ENCODE measurements at regions of chr13 and their contacts with region 1.

Region 1: DNA sequence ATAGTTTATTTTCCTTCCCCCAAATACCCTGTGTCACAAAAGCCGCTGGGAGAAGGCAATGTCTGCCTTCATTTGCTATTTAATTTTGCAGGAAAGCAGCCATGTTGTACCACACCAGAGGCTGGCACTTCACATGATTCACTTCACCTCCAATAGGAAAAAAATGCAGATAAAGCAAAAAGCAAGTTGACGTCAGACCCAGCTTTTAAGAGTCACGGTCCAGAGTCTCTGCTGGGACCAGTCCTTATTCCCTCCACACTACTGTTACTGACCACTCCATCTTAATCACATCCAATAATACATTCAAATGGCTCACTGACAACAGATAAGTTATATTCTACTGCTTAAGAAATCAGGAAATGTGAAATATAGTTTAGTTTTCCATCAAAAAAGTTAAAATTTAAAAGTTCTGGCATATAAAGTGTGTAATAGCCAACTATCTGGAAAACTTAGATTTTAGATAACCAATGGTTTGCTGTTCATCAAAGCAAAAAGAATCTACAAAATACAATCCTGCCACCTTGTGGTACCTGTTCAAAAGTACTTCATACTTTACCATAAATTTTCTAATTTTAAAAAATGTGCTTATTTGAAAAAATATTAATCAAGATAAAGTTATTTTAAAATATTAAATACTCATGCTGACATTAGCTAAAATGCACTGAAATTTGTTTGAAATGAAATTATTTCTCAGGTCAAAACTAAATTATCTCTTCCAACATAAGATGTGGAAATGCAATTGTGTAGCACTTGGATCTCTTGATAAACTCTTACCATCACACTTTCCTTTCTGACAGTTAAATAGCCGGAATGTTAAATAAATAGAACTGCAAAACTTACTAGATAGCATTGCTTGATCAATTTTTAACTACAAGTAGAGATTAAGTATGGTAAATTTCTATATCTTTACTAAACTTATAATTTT is 97.3 kb downstream of the SERP2 start:
- DNase-seq: peak; percentile 51
- H3K4me3 ChIP-seq: no peak overlapping the region
- CTCF ChIP-seq: peak; percentile 39

Region 2: GRCh38 chr13:43905435-43906031 is 565.4 kb before region 1 on chr13:
- in situ Hi-C with region 1: loop called (anchors 25 kb)
- DNase-seq: peak; percentile 82
- H3K4me3 ChIP-seq: no peak overlapping the region
- CTCF ChIP-seq: peak; percentile 63

Region 3: DNA sequence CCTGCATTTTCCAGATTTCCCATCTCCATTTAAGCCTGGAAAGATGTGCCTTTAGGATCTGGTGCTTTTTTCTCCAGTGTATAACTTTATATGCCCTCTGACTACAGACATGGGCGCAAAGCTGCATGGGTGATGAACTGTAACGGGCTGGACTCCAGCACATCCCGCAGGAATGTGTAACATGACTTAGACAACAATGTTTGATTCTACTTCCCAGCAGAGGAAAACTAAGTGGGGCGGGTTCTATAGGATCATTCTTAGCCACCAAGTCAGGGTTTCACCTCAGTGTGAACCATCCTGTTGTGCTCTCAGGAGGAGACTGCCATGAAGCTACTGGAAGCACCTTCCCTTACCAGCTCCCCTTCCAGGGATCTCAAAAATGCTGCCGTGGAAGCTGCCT is 190.4 kb before region 1 on chr13:
- in situ Hi-C with region 1: no loop called
- DNase-seq: peak; percentile 69
- H3K4me3 ChIP-seq: no peak overlapping the region
- CTCF ChIP-seq: no peak

Region 4: GRCh38 chr13:44680746-44681355 is 210.0 kb after region 1 on chr13:
- in situ Hi-C with region 1: no loop called
- DNase-seq: no peak
- H3K4me3 ChIP-seq: no peak overlapping the region
- CTCF ChIP-seq: no peak

Region 5: GRCh38 chr13:45040622-45041021 is 569.7 kb after region 1 on chr13:
- in situ Hi-C with region 1: no loop called
- DNase-seq: no peak
- H3K4me3 ChIP-seq: no peak overlapping the region
- CTCF ChIP-seq: no peak